Naive thymus-derived CD4-positive, alpha-beta T cell (primary cell): ENCODE measurements at regions of chr6 and their contacts with region 1.

Region 1: GRCh38 chr6:24991810-24992467 is 56.2 kb upstream of the RIPOR2 start:
- DNase-seq: peak; percentile 34 to 88 (median 81)
- ATAC-seq: peak; percentile 97
- H3K4me3 ChIP-seq: peak overlapping the region; percentile 37
- H3K4me3 Mint-ChIP-seq: peak overlapping the region; percentile 2 to 81 (median 68)
- H3K27ac ChIP-seq: peak overlapping the region; percentile 61
- H3K27ac Mint-ChIP-seq: peak overlapping the region; percentile 73 to 96 (median 88)
- H3K4me1 ChIP-seq: peaks cover 11 to 29% of the 10 kb centered on the region in 2 donors
- H3K4me1 Mint-ChIP-seq: peaks cover 47 to 88% (median 81%) of the 10 kb centered on the region in 7 donors
- H3K27me3 ChIP-seq: no peaks in the 10 kb centered on the region
- H3K27me3 Mint-ChIP-seq: no peaks in the 10 kb centered on the region

Region 2: DNA sequence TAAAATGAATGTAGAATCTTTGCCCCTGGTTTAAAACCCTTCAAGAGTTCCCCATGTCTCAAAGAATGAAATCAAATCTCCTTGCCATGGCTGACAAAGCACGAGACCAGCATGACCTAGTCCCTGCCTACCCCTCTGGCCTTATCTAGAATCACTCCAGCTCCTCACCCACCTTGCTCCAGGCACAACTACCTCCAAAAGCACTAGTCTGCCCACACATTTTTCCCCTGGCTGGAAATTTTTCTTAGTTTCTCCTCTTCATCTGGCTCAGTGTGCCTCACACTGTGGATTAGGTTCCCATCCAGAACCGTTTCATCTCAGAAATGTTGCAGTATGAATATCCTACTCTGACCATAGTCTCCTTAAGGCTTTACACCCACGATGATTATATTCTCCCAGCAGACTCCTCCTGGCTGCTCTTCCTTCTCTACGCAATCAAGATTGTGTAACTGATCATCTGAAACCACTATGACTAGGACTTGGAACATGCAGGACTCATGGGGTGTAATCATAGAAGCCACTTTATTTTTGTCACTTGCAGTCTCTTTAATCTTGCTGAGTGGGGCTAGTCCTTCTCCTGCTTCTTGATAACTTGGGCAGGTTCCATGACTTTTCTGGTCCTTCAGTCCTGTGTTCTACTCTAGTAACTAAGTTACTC is 597.0 kb before region 1 on chr6:
- CTCF ChIA-PET with region 1: no interaction called
- POLR2A ChIA-PET with region 1: no interaction called
- intact Hi-C with region 1: no loop called
- DNase-seq: no peak
- ATAC-seq: peak; percentile 24
- H3K4me3 ChIP-seq: no peak overlapping the region
- H3K4me3 Mint-ChIP-seq: no peak overlapping the region
- H3K27ac ChIP-seq: no peak overlapping the region
- H3K27ac Mint-ChIP-seq: peak overlapping the region in 1 of 9 donors; percentile 51
- H3K4me1 ChIP-seq: no peaks in the 10 kb centered on the region
- H3K4me1 Mint-ChIP-seq: peaks cover 0 to 5% (median 0%) of the 10 kb centered on the region in 7 donors
- H3K27me3 ChIP-seq: no peaks in the 10 kb centered on the region
- H3K27me3 Mint-ChIP-seq: peaks cover 22 to 48% (median 38%) of the 10 kb centered on the region in 5 donors

Region 3: DNA sequence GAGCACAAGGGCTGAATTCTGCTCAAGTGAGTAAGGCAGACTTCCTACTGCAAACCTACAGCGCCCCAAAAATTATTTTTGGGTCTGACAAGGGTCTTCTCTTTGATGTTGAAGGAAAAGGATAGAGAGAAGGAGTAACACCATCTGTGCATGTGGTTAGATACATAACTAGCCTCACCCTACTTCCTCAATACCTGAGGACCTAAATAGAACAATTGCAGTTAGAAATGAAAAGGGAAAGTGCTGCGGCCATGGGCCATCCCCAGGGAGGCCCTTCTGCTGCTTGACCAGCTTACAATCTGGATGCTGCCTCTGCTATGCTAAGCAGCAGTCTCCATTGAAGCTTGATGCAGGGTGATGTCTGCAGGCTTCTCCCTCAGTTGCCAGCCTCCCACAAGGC is 130.0 kb before region 1 on chr6:
- CTCF ChIA-PET with region 1: interaction called, 47 read pairs
- POLR2A ChIA-PET with region 1: interaction called, 24 read pairs
- intact Hi-C with region 1: no loop called
- DNase-seq: no peak
- ATAC-seq: no peak
- H3K4me3 ChIP-seq: no peak overlapping the region
- H3K4me3 Mint-ChIP-seq: peak overlapping the region in 9 of 10 donors; percentile 14 to 89 (median 73)
- H3K27ac ChIP-seq: peak overlapping the region; percentile 72
- H3K27ac Mint-ChIP-seq: peak overlapping the region in 8 of 9 donors; percentile 86 to 98 (median 93)
- H3K4me1 ChIP-seq: peaks cover 64 to 89% of the 10 kb centered on the region in 2 donors
- H3K4me1 Mint-ChIP-seq: peaks cover 70 to 100% (median 94%) of the 10 kb centered on the region in 7 donors
- H3K27me3 ChIP-seq: no peaks in the 10 kb centered on the region
- H3K27me3 Mint-ChIP-seq: no peaks in the 10 kb centered on the region

Region 4: DNA sequence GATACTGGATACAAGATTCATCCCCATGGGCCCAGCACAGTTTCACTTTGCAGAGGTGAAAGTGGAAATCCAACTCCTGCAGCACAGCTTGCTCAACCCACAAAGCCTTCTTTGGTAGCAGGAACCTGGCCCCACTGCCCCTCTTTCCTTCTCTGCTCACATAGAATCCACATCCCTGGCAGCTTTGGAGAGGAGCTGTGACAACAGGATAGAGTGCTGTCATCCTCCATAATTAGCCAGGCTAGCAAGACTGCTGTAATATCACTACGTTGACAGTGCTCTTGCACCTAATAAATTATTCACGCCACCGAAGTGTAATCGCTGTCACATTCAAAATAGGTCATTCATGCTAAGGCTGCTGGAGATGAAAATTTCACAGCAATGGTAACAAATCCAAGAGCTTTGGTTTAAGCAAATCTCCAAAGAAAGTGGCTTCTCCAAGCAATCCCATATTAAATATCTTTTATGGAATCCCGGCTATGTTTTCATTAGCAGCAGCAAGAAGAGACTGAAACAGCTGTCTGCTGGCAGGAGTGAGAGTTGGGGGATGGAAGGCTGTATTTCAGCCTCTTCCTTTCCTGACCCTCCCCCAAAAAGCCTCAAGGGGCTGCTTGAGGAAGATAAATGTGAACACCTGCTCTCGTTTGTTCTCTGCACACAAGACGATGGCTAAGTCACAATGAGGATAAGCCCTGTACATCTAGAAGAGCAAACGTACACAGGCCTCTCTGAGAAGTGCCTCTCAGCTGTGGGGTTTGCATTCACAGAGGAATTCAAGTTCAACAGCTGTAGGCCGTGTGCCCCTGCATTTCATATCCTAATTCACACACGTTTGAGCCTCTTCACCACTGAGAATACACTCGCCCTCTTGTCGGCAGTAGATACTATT is 72.7 kb before region 1 on chr6:
- CTCF ChIA-PET with region 1: interaction called, 28 read pairs
- POLR2A ChIA-PET with region 1: interaction called, 733 read pairs
- intact Hi-C with region 1: loop called in 1 of 2 experiments (anchors 5 kb)
- DNase-seq: no peak
- ATAC-seq: peak; percentile 53
- H3K4me3 ChIP-seq: peak overlapping the region; percentile 24
- H3K4me3 Mint-ChIP-seq: peak overlapping the region; percentile 74 to 97 (median 86)
- H3K27ac ChIP-seq: peak overlapping the region; percentile 71
- H3K27ac Mint-ChIP-seq: peak overlapping the region; percentile 61 to 98 (median 90)
- H3K4me1 ChIP-seq: peaks cover 90% of the 10 kb centered on the region in 2 donors
- H3K4me1 Mint-ChIP-seq: peaks cover 79 to 100% (median 93%) of the 10 kb centered on the region in 7 donors
- H3K27me3 ChIP-seq: no peaks in the 10 kb centered on the region
- H3K27me3 Mint-ChIP-seq: no peaks in the 10 kb centered on the region

Region 5: DNA sequence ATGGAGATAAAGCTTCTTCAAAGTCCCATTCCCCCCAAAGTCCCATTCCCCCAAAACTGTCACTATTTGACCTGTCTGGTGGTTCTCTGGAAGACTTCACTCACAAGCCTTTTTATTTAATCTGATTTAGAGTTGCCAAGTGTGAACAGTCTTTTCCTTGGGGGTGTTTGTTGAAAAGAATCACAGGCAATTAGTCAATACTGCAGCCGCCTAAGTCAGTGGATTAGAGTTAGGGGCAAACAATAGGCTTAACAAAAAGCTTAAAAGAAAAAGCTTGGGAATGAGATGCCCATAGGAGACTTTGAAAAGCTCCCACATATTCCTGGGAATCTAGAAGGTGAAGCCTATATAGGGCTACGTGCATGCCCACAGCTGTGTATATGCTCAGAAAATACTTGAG is 48.2 kb before region 1 on chr6:
- CTCF ChIA-PET with region 1: interaction called, 293 read pairs
- POLR2A ChIA-PET with region 1: interaction called, 1,138 read pairs
- intact Hi-C with region 1: no loop called
- DNase-seq: no peak
- ATAC-seq: no peak
- H3K4me3 ChIP-seq: peak overlapping the region; percentile 0
- H3K4me3 Mint-ChIP-seq: no peak overlapping the region
- H3K27ac ChIP-seq: no peak overlapping the region
- H3K27ac Mint-ChIP-seq: peak overlapping the region in 1 of 9 donors; percentile 78
- H3K4me1 ChIP-seq: peaks cover 40 to 45% of the 10 kb centered on the region in 2 donors
- H3K4me1 Mint-ChIP-seq: peaks cover 37 to 78% (median 59%) of the 10 kb centered on the region in 7 donors
- H3K27me3 ChIP-seq: no peaks in the 10 kb centered on the region
- H3K27me3 Mint-ChIP-seq: no peaks in the 10 kb centered on the region

Region 6: GRCh38 chr6:24966381-24966780 is 25.6 kb before region 1 on chr6:
- CTCF ChIA-PET with region 1: interaction called, 19 read pairs
- POLR2A ChIA-PET with region 1: interaction called, 1,138 read pairs
- intact Hi-C with region 1: no loop called
- DNase-seq: no peak
- ATAC-seq: no peak
- H3K4me3 ChIP-seq: no peak overlapping the region
- H3K4me3 Mint-ChIP-seq: peak overlapping the region in 1 of 10 donors; percentile 30
- H3K27ac ChIP-seq: no peak overlapping the region
- H3K27ac Mint-ChIP-seq: peak overlapping the region in 2 of 9 donors; percentile 37 to 75
- H3K4me1 ChIP-seq: peaks cover 52 to 64% of the 10 kb centered on the region in 2 donors
- H3K4me1 Mint-ChIP-seq: peaks cover 35 to 98% (median 88%) of the 10 kb centered on the region in 7 donors
- H3K27me3 ChIP-seq: no peaks in the 10 kb centered on the region
- H3K27me3 Mint-ChIP-seq: no peaks in the 10 kb centered on the region

Region 7: GRCh38 chr6:25006565-25007001 is 14.6 kb after region 1 on chr6:
- CTCF ChIA-PET with region 1: interaction called, 13 read pairs
- POLR2A ChIA-PET with region 1: interaction called, 28 read pairs
- intact Hi-C with region 1: loop called in 1 of 2 experiments (anchors 1 kb)
- DNase-seq: peak in 7 of 9 donors; percentile 30 to 51 (median 43)
- ATAC-seq: peak; percentile 80
- H3K4me3 ChIP-seq: peak overlapping the region; percentile 27
- H3K4me3 Mint-ChIP-seq: peak overlapping the region; percentile 56 to 84 (median 75)
- H3K27ac ChIP-seq: peak overlapping the region; percentile 64
- H3K27ac Mint-ChIP-seq: peak overlapping the region; percentile 85 to 94 (median 89)
- H3K4me1 ChIP-seq: peaks cover 46 to 50% of the 10 kb centered on the region in 2 donors
- H3K4me1 Mint-ChIP-seq: peaks cover 55 to 90% (median 86%) of the 10 kb centered on the region in 7 donors
- H3K27me3 ChIP-seq: no peaks in the 10 kb centered on the region
- H3K27me3 Mint-ChIP-seq: no peaks in the 10 kb centered on the region

Region 8: DNA sequence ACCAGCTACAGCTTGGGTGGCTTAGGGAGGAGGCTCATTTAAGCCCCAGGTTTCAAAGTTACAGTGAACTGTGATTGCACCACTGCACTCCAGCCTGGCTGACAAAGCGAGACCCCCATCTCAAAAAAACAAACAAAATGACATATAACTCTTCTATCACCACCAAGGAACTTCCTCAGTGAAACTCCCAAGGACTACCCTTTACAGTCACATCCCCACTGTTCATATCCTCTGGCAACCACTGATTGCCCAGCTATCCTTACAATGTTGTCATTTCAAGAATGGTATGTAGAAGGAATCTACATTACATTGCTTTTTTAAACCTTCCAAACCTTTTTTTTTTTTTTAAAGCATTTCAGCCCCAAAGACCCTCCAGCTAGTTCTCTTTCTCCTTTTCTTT is 164.2 kb after region 1 on chr6:
- CTCF ChIA-PET with region 1: no interaction called
- POLR2A ChIA-PET with region 1: no interaction called
- intact Hi-C with region 1: no loop called
- DNase-seq: no peak
- ATAC-seq: no peak
- H3K4me3 ChIP-seq: no peak overlapping the region
- H3K4me3 Mint-ChIP-seq: peak overlapping the region in 1 of 10 donors; percentile 1
- H3K27ac ChIP-seq: no peak overlapping the region
- H3K27ac Mint-ChIP-seq: peak overlapping the region in 2 of 9 donors; percentile 3 to 33
- H3K4me1 ChIP-seq: no peaks in the 10 kb centered on the region
- H3K4me1 Mint-ChIP-seq: peaks cover 0 to 48% (median 0%) of the 10 kb centered on the region in 7 donors
- H3K27me3 ChIP-seq: no peaks in the 10 kb centered on the region
- H3K27me3 Mint-ChIP-seq: peaks cover 0 to 12% (median 5%) of the 10 kb centered on the region in 5 donors